Heart left ventricle (tissue), 16 donors: ENCODE measurements at regions of chr5 and their contacts with region 1.

Region 1: GRCh38 chr5:139787568-139788293 is 7.9 kb upstream of the PSD2 start:
- DNase-seq: peak; percentile 85 to 93 (median 86)
- ATAC-seq: peak; percentile 86 to 94 (median 88)
- H3K4me3 ChIP-seq: peak overlapping the region; percentile 51 to 80 (median 65)
- H3K27ac ChIP-seq: peak overlapping the region; percentile 30 to 85 (median 69)
- H3K4me1 ChIP-seq: peaks cover 0 to 20% (median 7%) of the 10 kb centered on the region in 12 donors
- H3K27me3 ChIP-seq: peaks cover 0 to 5% (median 0%) of the 10 kb centered on the region in 9 donors
- CTCF ChIP-seq: peak; percentile 86 to 98 (median 90)
- POLR2A ChIP-seq: no peak

Region 2: GRCh38 chr5:139560752-139561654 is 226.7 kb before region 1 on chr5 and contains the start of gene UBE2D2:
- intact Hi-C with region 1: no loop called
- DNase-seq: peak; percentile 97 to 99 (median 98)
- ATAC-seq: peak; percentile 98 to 99 (median 98)
- H3K4me3 ChIP-seq: peak within 1 kb of the TSS; percentile 76 to 100 (median 88)
- H3K27ac ChIP-seq: peak within 1 kb of the TSS; percentile 89 to 100 (median 98)
- H3K4me1 ChIP-seq: peaks cover 14 to 46% (median 41%) of the 10 kb centered on the region in 12 donors
- H3K27me3 ChIP-seq: no peaks in the 10 kb centered on the region
- CTCF ChIP-seq: peak in 1 of 12 donors; percentile 11
- POLR2A ChIP-seq: peak in 1 of 2 donors; percentile 63
- total RNA-seq, gene UBE2D2: 96.2 to 148 (median 134) TPM

Region 3: GRCh38 chr5:139844472-139845145 is 56.9 kb after region 1 on chr5:
- intact Hi-C with region 1: loop called (anchors 1 to 5 kb)
- DNase-seq: peak; percentile 56 to 81 (median 70)
- ATAC-seq: peak in 2 of 4 donors; percentile 33 to 45
- H3K4me3 ChIP-seq: no peak overlapping the region
- H3K27ac ChIP-seq: no peak overlapping the region
- H3K4me1 ChIP-seq: peaks cover 0 to 25% (median 9%) of the 10 kb centered on the region in 12 donors
- H3K27me3 ChIP-seq: peaks cover 0 to 9% (median 0%) of the 10 kb centered on the region in 9 donors
- CTCF ChIP-seq: peak; percentile 49 to 78 (median 66)
- POLR2A ChIP-seq: no peak

Region 4: GRCh38 chr5:139949710-139950109 is 162.0 kb after region 1 on chr5:
- intact Hi-C with region 1: loop called in 1 of 10 experiments (anchors 5 kb)
- DNase-seq: peak in 3 of 5 donors; percentile 46 to 74 (median 66)
- ATAC-seq: peak; percentile 48 to 86 (median 67)
- H3K4me3 ChIP-seq: no peak overlapping the region
- H3K27ac ChIP-seq: peak overlapping the region in 6 of 12 donors; percentile 28 to 70 (median 46)
- H3K4me1 ChIP-seq: peaks cover 0 to 48% (median 15%) of the 10 kb centered on the region in 12 donors
- H3K27me3 ChIP-seq: no peaks in the 10 kb centered on the region
- CTCF ChIP-seq: no peak
- POLR2A ChIP-seq: no peak

Region 5: GRCh38 chr5:139985733-139986132 is 198.0 kb after region 1 on chr5:
- intact Hi-C with region 1: no loop called
- DNase-seq: peak in 3 of 5 donors; percentile 37 to 62 (median 61)
- ATAC-seq: peak; percentile 89 to 96 (median 94)
- H3K4me3 ChIP-seq: no peak overlapping the region
- H3K27ac ChIP-seq: peak overlapping the region in 11 of 12 donors; percentile 24 to 73 (median 67)
- H3K4me1 ChIP-seq: peaks cover 0 to 41% (median 18%) of the 10 kb centered on the region in 12 donors
- H3K27me3 ChIP-seq: no peaks in the 10 kb centered on the region
- CTCF ChIP-seq: no peak
- POLR2A ChIP-seq: no peak

Region 6: DNA sequence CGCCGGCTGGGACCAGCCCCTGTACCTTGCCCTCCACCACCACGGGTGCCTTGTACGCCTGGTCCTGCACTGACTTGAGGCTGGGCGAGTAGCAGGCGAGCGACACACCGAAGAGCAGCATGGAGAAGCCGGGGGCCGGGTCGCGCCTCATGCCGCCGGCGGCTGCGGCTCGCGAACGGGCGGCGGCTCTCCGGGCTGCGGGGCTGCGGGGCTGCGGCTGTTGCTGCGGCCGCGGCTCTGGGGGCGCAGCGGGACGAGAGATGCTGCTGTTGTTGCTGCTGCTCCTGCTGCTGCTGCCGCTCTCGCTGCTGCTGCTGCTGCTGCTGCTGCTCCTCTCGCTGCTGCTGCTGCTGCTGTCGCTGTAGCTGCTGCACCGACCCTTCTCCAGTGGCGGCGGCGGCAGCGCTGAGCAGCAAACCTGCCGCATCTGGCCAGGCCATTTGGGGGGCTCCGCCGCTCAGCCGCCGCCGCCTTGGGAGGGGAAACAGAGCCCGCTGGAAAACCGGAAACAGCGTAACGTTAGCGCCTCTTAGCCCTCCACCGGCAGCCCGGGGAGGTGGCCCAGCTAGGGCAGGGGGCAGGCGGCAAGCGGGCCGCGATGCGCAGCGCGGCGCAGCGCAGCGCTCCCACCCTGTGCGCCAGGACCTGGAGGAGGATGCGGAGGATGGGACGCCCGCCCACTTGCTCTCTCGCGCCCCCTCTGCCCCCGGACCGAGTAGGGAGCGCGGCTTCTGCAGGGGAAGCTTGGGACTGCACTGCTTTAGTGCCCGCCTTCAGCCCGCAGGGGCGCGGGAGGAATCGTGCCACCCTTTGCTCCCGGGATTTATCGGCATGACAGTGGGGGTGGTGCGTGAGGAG is 255.1 kb after region 1 on chr5 and contains the start of gene NRG2:
- intact Hi-C with region 1: loop called in 1 of 10 experiments (anchors 5 kb)
- DNase-seq: peak; percentile 74 to 88 (median 77)
- ATAC-seq: peak; percentile 80 to 92 (median 86)
- H3K4me3 ChIP-seq: peak within 1 kb of the TSS; percentile 57 to 89 (median 72)
- H3K27ac ChIP-seq: peak within 1 kb of the TSS; percentile 43 to 93 (median 82)
- H3K4me1 ChIP-seq: peaks cover 0 to 48% (median 27%) of the 10 kb centered on the region in 12 donors
- H3K27me3 ChIP-seq: peaks cover 0 to 47% (median 0%) of the 10 kb centered on the region in 9 donors
- CTCF ChIP-seq: peak; percentile 35 to 69 (median 58)
- POLR2A ChIP-seq: peak in 1 of 2 donors; percentile 41
- total RNA-seq, gene NRG2: 1.9 to 4.8 (median 3.4) TPM

Region 7: GRCh38 chr5:140131967-140132409 is 344.3 kb after region 1 on chr5:
- intact Hi-C with region 1: no loop called
- DNase-seq: no peak
- ATAC-seq: peak in 3 of 4 donors; percentile 71 to 85 (median 84)
- H3K4me3 ChIP-seq: no peak overlapping the region
- H3K27ac ChIP-seq: peak overlapping the region in 3 of 12 donors; percentile 9 to 21 (median 15)
- H3K4me1 ChIP-seq: peaks cover 6 to 40% (median 27%) of the 10 kb centered on the region in 12 donors
- H3K27me3 ChIP-seq: no peaks in the 10 kb centered on the region
- CTCF ChIP-seq: no peak
- POLR2A ChIP-seq: no peak

Region 8: GRCh38 chr5:140145818-140146522 is 358.2 kb after region 1 on chr5:
- intact Hi-C with region 1: loop called in 2 of 10 experiments (anchors 2 to 10 kb)
- DNase-seq: peak; percentile 75 to 88 (median 79)
- ATAC-seq: peak; percentile 66 to 95 (median 94)
- H3K4me3 ChIP-seq: peak overlapping the region; percentile 15 to 61 (median 50)
- H3K27ac ChIP-seq: peak overlapping the region in 3 of 12 donors; percentile 3 to 26 (median 13)
- H3K4me1 ChIP-seq: peaks cover 0 to 27% (median 17%) of the 10 kb centered on the region in 12 donors
- H3K27me3 ChIP-seq: peaks cover 0 to 11% (median 0%) of the 10 kb centered on the region in 9 donors
- CTCF ChIP-seq: peak; percentile 59 to 91 (median 80)
- POLR2A ChIP-seq: no peak